Dorsolateral prefrontal cortex (tissue), 120 donors: ENCODE measurements at regions of chr12 and their contacts with region 1.

Region 1: DNA sequence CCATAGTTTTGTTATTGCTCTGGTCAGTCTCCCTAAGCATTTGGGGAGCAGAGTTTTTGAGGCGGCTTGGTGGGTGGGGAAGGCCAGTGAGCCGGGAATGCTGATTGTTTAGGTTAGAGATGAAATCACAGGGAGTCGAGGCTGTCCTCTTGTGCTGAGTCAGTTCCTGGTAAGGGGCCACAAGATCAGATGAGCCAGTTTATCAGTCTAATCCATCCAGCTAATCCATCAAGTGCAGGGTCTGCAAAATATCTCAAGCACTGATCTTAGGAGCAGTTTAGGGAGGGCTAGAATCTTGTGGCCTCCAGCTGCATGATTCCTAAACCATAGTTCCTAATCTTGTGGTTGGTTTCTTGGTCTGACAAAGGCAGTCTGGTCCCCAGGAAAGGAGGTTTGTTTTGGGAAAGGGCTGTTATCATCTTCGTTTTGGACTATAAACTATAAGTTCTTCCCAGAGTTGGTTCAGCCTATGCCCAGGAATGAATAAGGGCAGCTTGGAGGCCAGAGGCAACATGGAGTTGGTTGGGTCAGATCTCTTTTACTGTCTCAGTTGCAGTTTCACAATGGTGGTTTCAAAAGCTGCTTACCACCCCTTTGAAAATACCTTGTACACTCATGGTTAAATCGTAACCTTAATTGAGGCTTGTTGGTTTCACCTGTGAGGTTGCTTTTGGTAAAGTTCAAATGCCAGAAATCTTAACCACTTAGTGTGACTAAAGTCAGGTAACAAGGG is 33.6 kb upstream of the HIGD1C start:
- DNase-seq: no peak
- H3K4me3 ChIP-seq: no peak overlapping the region
- H3K27ac ChIP-seq: no peak overlapping the region
- H3K27me3 ChIP-seq: no peaks in the 10 kb centered on the region
- CTCF ChIP-seq: no peak

Region 2: GRCh38 chr12:50825372-50825838 is 93.3 kb before region 1 on chr12:
- intact Hi-C with region 1: loop called in 1 of 2 experiments (anchors 5 kb)
- DNase-seq: no peak
- H3K4me3 ChIP-seq: peak overlapping the region in 3 of 59 donors; percentile 6 to 20 (median 10)
- H3K27ac ChIP-seq: peak overlapping the region in 29 of 59 donors; percentile 1 to 65 (median 32)
- H3K27me3 ChIP-seq: no peaks in the 10 kb centered on the region
- CTCF ChIP-seq: peak; percentile 52 to 84 (median 70)

Region 3: GRCh38 chr12:50955288-50955687 is 36.5 kb after region 1 on chr12:
- intact Hi-C with region 1: loop called in 1 of 2 experiments (anchors 2 kb)
- DNase-seq: no peak
- H3K4me3 ChIP-seq: no peak overlapping the region
- H3K27ac ChIP-seq: no peak overlapping the region
- H3K27me3 ChIP-seq: no peaks in the 10 kb centered on the region
- CTCF ChIP-seq: no peak